ENCODE measurements at regions of chr16 and their contacts with region 1.

Region 1: GRCh38 chr16:74623214-74623842 is 16.4 kb upstream of the GLG1 start:
- DNase-seq: peak; percentile 14

Region 2: DNA sequence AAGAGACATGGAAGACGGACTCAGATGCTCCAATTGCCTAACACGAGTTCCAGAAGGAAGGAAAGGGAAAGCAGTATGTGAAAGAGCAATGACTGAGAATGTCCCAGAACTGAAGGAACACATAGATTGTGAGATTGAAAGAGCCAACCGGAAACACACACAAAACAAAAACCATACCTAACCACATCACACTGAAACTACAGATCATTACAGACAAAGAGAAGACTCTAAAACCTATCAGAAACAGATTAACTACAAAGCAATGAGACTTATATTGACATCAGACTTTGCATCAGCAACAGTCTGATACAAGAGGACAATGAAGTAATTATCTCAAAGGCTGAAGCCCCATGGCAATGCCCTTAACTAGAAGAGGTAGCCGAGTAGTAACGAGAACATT is 156.5 kb before region 1 on chr16:
- intact Hi-C with region 1: loop called (anchors 5 to 10 kb)
- DNase-seq: no peak

Region 3: GRCh38 chr16:74679983-74680382 is 56.7 kb after region 1 on chr16:
- intact Hi-C with region 1: loop called in 1 of 2 experiments (anchors 2 kb)
- DNase-seq: no peak